ENCODE measurements at regions of chr6 and their contacts with region 1.

Region 1: GRCh38 chr6:160520043-160520904 is 143.8 kb downstream of the LPA start:
- DNase-seq: peak; percentile 50
- ATAC-seq: peak; percentile 92
- H3K4me3 ChIP-seq: peak overlapping the region; percentile 49 to 75 (median 50)
- H3K27ac ChIP-seq: peak overlapping the region; percentile 23
- H3K4me1 ChIP-seq: peaks cover 6% of the 10 kb centered on the region
- H3K27me3 ChIP-seq: peaks cover 0 to 9% of the 10 kb centered on the region in 2 experiments; a peak in 2 of 5 replicates
- CTCF ChIP-seq: peak; percentile 97
- EP300 ChIP-seq: no peak
- POLR2A ChIP-seq: no peak
- RAD21 ChIP-seq: no peak; the same call in 1 of the 2 replicates

Region 2: GRCh38 chr6:160455541-160456213 is 64.6 kb before region 1 on chr6:
- CTCF ChIA-PET with region 1: no interaction called
- POLR2A ChIA-PET with region 1: no interaction called
- in situ Hi-C with region 1: no loop called
- intact Hi-C with region 1: no loop called
- DNase-seq: peak; percentile 62
- ATAC-seq: peak; percentile 86
- H3K4me3 ChIP-seq: no peak overlapping the region
- H3K27ac ChIP-seq: no peak overlapping the region
- H3K4me1 ChIP-seq: peaks cover 8% of the 10 kb centered on the region
- H3K27me3 ChIP-seq: no peaks in the 10 kb centered on the region
- CTCF ChIP-seq: peak; percentile 100
- EP300 ChIP-seq: no peak
- POLR2A ChIP-seq: no peak
- RAD21 ChIP-seq: peak; percentile 97

Region 3: GRCh38 chr6:160534050-160534696 is 13.9 kb after region 1 on chr6:
- CTCF ChIA-PET with region 1: interaction called, 28 read pairs
- POLR2A ChIA-PET with region 1: no interaction called
- in situ Hi-C with region 1: no loop called
- intact Hi-C with region 1: loop called (anchors 1 kb)
- DNase-seq: peak; percentile 52
- ATAC-seq: peak; percentile 96
- H3K4me3 ChIP-seq: no peak overlapping the region
- H3K27ac ChIP-seq: no peak overlapping the region
- H3K4me1 ChIP-seq: peaks cover 4% of the 10 kb centered on the region; the same call in 1 of the 2 replicates
- H3K27me3 ChIP-seq: no peaks in the 10 kb centered on the region
- CTCF ChIP-seq: peak; percentile 97
- EP300 ChIP-seq: no peak
- POLR2A ChIP-seq: no peak
- RAD21 ChIP-seq: peak; percentile 89

Region 4: DNA sequence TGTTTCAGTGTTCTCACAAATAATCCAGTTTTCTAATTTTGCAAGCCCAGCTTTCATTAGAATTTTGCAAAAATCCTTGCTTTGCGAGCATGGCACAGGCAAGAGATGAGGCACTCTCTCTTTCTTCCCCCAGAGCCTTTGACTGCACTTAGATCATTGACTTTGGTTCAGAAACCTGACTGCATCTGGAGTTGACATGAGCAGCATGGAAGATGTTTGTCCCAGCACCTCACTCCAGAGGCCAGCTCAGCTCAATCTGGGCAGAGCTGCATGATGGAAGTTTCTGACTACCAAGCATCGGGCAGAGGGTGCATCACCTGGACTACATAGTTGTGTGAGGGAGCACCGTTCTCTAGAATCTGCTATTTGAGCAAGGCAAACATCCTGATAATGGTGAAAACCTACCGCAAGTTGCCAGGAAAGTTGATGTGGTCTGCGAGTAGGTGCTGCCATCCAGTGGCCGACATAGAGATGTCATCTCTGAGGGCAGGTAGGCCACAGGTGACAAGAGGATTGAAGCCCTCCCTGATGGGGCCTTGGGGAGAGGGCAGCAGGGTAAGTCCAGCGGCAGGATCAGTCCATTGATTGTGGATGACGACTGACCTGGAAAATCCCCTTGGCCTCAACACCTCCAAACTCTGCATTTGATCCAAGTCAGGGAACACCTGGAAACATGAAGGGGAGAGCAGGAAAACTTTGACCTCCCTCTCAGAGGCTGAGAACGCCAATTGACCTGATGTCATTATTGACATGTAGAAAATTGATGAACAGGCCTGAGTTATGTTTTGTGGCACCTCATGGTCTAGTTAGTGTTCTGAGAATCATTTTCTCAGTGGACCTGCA is 147.6 kb after region 1 on chr6:
- CTCF ChIA-PET with region 1: interaction called, 17 read pairs
- POLR2A ChIA-PET with region 1: no interaction called
- in situ Hi-C with region 1: loop called (anchors 25 kb)
- intact Hi-C with region 1: loop called (anchors 1 kb)
- DNase-seq: peak; percentile 50
- ATAC-seq: peak; percentile 98
- H3K4me3 ChIP-seq: no peak overlapping the region
- H3K27ac ChIP-seq: no peak overlapping the region
- H3K4me1 ChIP-seq: no peaks in the 10 kb centered on the region
- H3K27me3 ChIP-seq: no peaks in the 10 kb centered on the region
- CTCF ChIP-seq: peak; percentile 94
- EP300 ChIP-seq: no peak
- POLR2A ChIP-seq: no peak
- RAD21 ChIP-seq: peak; percentile 73; the same call in 1 of the 2 replicates

Region 5: GRCh38 chr6:160766989-160767660 is 246.9 kb after region 1 on chr6:
- CTCF ChIA-PET with region 1: no interaction called
- POLR2A ChIA-PET with region 1: no interaction called
- in situ Hi-C with region 1: no loop called
- intact Hi-C with region 1: loop called (anchors 5 kb)
- DNase-seq: peak; percentile 39
- ATAC-seq: peak; percentile 99
- H3K4me3 ChIP-seq: peak overlapping the region; percentile 35 to 72 (median 54); a peak in 5 of 6 replicates
- H3K27ac ChIP-seq: no peak overlapping the region
- H3K4me1 ChIP-seq: no peaks in the 10 kb centered on the region
- H3K27me3 ChIP-seq: peaks cover 3 to 14% of the 10 kb centered on the region in 2 experiments; a peak in 3 of 5 replicates
- CTCF ChIP-seq: peak; percentile 96
- EP300 ChIP-seq: no peak
- POLR2A ChIP-seq: no peak
- RAD21 ChIP-seq: peak; percentile 68